ENCODE measurements at regions of chr20 and their contacts with region 1.

Region 1: GRCh38 chr20:32762149-32762753 is at the start of gene DNMT3B:
- DNase-seq: peak; percentile 84

Region 2: GRCh38 chr20:32681175-32682084 is 80.8 kb before region 1 on chr20:
- CTCF ChIA-PET with region 1: no interaction called
- POLR2A ChIA-PET with region 1: interaction called, 15 read pairs
- DNase-seq: no peak

Region 3: DNA sequence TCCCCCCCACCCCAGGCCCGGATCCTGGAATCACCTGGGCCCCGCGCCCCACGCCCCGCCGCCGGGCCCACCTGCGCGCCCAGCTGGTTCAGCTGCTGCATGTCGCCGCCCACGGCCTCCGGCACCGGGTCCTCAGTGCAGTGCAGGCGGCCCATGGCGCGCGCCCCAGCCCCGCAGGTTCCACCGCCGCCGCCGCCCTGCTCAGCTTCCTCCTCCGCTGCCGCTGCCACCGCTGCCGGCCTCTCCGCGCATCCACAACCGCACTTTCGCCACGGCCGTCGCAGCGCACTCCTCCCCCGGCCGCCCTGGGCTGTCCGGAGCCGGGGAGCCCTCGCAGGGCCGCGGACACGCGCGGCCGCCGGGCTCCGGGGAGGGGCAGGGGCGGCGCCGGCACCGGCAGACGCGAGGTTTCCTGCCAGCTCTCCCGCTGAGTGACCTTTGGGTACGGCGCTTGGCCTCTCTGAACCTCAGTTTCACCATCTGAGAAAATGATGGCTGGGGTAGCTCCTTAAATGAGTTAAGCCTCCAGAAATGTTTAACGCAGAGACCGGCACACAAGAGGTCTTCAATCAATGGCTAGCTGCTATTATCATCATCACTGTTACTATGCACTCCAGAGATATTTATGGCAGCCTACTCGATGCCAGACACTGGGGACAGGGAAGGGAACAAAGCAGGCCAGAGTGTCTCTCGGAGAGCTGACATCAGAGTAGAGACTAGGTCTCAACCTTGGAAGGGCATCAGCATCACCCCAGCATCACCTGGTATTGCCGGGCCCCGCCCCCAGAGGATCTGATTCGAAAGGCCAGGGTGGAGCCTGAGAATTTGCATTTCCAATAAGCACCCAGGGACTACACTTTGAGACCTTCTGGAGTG is 18.8 kb before region 1 on chr20 and contains the start of gene COMMD7:
- CTCF ChIA-PET with region 1: interaction called, 7 read pairs
- POLR2A ChIA-PET with region 1: interaction called, 19 read pairs
- DNase-seq: peak; percentile 43

Measured in HEK293T (cell line).